ENCODE measurements at regions of chr1 and their contacts with region 1.

Region 1: DNA sequence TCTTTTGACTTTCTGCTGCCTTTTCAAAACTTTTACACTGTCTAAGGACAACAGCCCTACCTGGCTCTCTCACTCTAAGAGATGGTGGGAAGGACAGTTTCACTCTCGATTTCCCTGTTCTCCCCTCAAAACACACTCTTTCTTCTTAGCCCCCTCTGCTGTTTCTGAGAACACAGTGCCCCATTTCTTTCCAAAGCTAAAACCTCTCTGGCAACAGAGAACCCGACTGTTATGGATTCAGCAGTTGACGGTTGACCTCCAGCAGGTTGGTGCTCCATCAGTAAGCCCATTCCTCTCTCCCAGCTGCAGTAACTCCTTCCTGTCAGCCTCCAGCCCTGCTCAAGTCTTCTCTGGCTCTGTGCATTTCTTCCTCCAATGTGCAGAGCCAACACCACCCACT is 88.2 kb upstream of the ABCD3 start:
- DNase-seq: peak in 1 of 4 donors; percentile 30
- ATAC-seq: peak; percentile 54
- H3K4me3 ChIP-seq: no peak overlapping the region
- H3K27ac ChIP-seq: no peak overlapping the region
- H3K4me1 ChIP-seq: peaks cover 7 to 35% of the 10 kb centered on the region in 2 donors
- H3K27me3 ChIP-seq: peaks cover 0 to 4% of the 10 kb centered on the region in 2 donors
- CTCF ChIP-seq: peak in 1 of 2 donors; percentile 23

Region 2: DNA sequence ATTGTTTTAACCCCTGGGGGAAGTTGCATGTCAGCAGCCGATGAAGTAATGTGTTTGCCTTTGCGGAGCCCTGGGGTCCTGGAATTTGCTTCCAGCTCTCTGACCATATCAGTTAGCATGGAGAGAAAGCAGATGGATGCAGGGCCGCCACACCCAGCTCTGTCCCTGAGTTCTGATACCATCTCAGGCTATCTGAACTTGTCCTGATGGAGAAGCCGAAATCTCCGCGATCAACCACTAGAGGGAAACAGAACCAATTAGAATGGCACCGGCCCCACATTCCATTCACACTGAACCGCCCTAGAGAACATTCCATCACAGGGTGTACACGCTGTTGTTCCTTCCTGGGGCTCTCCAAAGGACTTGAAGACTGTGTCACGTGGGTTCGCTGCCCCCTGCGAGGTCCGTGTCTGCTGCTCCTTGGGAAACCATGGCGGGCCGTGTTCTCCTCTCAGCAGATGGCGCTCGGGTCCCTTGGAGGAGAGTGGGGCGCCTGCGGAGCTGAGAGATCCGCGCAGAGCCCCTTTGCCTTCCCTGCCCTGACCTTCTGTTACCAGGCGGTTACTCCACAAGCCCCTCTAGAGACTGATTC is 284.4 kb before region 1 on chr1:
- intact Hi-C with region 1: loop called (anchors 5 to 10 kb)
- DNase-seq: peak; percentile 77 to 93 (median 88)
- ATAC-seq: peak; percentile 92
- H3K4me3 ChIP-seq: no peak overlapping the region
- H3K27ac ChIP-seq: peak overlapping the region; percentile 78 to 79
- H3K4me1 ChIP-seq: peaks cover 12 to 47% of the 10 kb centered on the region in 2 donors
- H3K27me3 ChIP-seq: no peaks in the 10 kb centered on the region
- CTCF ChIP-seq: peak; percentile 59 to 71

Region 3: DNA sequence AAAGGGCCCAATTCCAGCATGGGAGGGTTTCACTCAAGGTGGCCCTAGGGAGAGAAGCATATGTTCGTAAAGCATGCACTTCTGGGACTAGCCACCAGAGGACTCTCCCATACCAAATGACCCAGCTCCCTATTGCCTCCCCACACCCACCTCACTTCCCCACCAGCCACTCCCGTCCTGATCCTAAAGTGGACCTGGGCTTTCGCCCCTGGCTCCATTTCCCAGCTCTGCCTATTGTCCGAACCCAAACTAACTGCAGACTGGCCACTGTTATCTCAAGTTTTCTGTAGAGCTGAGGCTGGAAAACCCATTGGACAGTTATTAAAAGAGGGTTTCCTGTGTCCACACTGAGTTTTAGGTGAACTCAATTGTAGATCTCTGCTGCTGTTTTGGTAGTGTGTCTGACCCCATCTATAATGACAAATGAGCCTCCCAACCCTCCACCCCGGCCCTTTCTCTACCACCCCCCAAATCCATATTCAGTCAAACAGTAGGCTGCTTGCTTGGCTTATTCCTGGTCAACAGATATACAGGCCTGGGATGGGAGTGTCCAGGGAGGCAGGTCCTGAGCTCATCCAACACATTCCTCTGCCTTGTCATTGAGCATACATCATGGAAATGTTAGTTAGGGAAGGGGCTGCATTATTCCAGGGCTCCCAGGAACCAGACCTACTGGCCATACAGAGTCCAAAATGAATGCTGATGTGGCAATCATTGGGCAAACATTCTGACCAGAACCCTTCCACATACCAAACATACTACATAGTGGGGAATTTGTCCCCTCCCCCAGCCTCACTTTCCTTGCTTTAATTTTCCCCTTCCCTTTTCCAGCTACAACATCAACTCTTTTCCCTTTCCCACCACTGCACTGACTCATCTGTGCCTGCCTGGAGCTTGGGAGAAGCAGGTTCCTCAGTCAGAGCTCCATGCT is 268.2 kb before region 1 on chr1:
- intact Hi-C with region 1: loop called in 1 of 2 experiments (anchors 5 kb)
- DNase-seq: peak in 2 of 4 donors; percentile 58 to 73
- ATAC-seq: peak; percentile 96
- H3K4me3 ChIP-seq: no peak overlapping the region
- H3K27ac ChIP-seq: peak overlapping the region; percentile 37 to 55
- H3K4me1 ChIP-seq: peaks cover 11 to 25% of the 10 kb centered on the region in 2 donors
- H3K27me3 ChIP-seq: no peaks in the 10 kb centered on the region
- CTCF ChIP-seq: peak; percentile 79 to 86

Region 4: DNA sequence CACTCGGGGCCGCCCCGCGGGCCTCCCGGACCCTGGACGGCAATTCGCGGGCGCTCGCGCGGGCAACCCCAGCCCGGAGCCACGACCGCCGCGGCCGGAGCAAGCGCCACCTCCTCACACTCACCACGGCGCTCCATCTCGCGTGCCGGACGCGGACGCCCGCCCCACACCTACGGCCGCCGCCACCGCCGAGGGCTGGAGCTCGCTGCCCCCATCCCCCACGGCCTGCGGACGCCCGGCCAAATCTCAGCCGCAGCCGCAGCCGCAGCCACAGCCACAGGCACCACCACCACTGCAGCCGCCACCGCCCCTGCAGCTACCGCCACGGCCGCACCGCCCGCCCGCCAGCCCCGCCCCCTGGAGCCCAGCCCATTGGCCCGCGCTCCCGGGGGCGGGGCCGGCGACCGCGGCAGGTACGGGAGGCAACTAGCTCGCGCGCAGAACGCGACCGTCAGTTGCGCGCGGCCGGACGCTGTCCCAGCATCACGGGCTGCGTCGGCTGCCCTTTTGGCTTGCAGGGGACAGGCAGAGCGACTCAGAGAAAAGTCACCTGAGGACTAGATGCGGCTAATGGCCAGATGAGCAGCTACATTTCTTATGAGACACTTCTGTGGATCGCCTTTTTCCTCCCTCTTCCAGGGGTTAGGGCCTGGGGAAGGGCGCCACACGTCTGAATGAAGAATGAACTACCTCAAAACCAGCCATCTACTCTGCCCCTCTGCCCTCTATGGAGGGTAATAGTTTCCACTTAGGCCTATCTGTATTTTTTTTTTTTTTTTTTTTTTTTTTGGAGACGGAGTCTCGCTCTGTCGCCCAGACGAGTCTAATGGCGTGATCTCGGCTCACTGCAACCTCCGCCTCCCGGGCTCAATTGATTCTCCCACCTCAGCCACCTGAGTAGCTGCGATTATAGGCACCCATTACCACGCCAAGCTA is 92.4 kb before region 1 on chr1 and contains the start of gene ARHGAP29:
- intact Hi-C with region 1: loop called in 1 of 2 experiments (anchors 5 kb)
- DNase-seq: peak; percentile 54 to 95 (median 82)
- ATAC-seq: peak; percentile 96
- H3K4me3 ChIP-seq: peak within 1 kb of the TSS; percentile 75 to 81
- H3K27ac ChIP-seq: peak within 1 kb of the TSS; percentile 89 to 93
- H3K4me1 ChIP-seq: peaks cover 0 to 21% of the 10 kb centered on the region in 2 donors
- H3K27me3 ChIP-seq: peaks cover 0 to 86% of the 10 kb centered on the region in 2 donors
- CTCF ChIP-seq: no peak
- polyA plus RNA-seq, gene ARHGAP29: 59.7 to 66.8 (median 64.2) TPM

Region 5: GRCh38 chr1:94398356-94398755 is 68.4 kb after region 1 on chr1:
- intact Hi-C with region 1: no loop called
- DNase-seq: no peak
- ATAC-seq: no peak
- H3K4me3 ChIP-seq: no peak overlapping the region
- H3K27ac ChIP-seq: no peak overlapping the region
- H3K4me1 ChIP-seq: no peaks in the 10 kb centered on the region
- H3K27me3 ChIP-seq: no peaks in the 10 kb centered on the region
- CTCF ChIP-seq: no peak